ENCODE measurements at regions of chr10 and their contacts with region 1.

Region 1: DNA sequence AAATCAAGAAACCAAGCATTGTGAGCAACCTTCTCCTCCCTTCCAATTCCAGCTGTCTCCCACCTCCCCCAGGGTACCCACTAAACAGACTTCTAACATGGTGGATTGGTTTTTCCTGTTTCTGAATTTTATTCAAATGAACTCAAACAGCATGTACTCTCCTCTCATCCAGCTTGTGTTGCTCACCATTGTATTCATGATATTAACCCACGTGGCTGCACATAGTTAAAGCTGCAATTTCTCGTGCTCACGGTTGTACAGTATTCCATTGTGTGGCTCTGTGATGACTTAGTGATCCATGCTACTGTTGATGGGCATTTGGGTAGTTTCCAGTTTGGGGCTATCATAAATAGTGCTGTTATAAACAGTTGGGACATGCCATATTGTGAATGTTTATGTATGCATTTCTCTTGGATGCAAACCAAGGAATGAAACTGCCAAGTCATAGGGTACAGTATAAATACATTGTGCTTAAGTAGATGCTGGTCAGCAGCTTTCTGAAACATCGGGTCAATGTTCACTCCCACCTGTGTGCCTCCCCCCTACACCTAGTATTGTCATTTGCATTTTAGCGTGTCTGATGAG is 124.3 kb downstream of the CACNB2 start:
- DNase-seq: peak; percentile 66
- H3K4me3 ChIP-seq: no peak overlapping the region
- H3K27ac ChIP-seq: no peak overlapping the region
- H3K4me1 ChIP-seq: peaks cover 5 to 54% (median 46%) of the 10 kb centered on the region in 4 donors
- H3K27me3 ChIP-seq: no peaks in the 10 kb centered on the region
- CTCF ChIP-seq: no peak
- EP300 ChIP-seq: no peak
- POLR2A ChIP-seq: no peak

Region 2: GRCh38 chr10:18229826-18230225 is 34.7 kb before region 1 on chr10:
- intact Hi-C with region 1: loop called (anchors 1 kb)
- DNase-seq: peak; percentile 7
- H3K4me3 ChIP-seq: no peak overlapping the region
- H3K27ac ChIP-seq: no peak overlapping the region
- H3K4me1 ChIP-seq: peaks cover 3 to 62% (median 45%) of the 10 kb centered on the region in 4 donors
- H3K27me3 ChIP-seq: no peaks in the 10 kb centered on the region
- CTCF ChIP-seq: no peak
- EP300 ChIP-seq: no peak
- POLR2A ChIP-seq: no peak

Measured in esophagus muscularis mucosa (tissue), 4 donors.